ENCODE measurements at regions of chr5 and their contacts with region 1.

Region 1: GRCh38 chr5:175729829-175730277 is 72.0 kb downstream of the HRH2 start:
- DNase-seq: peak; percentile 90 to 98 (median 95)
- H3K4me3 ChIP-seq: peak overlapping the region in 40 of 59 donors; percentile 0 to 53 (median 31)
- H3K27ac ChIP-seq: no peak overlapping the region
- H3K27me3 ChIP-seq: peaks cover 0 to 18% (median 5%) of the 10 kb centered on the region in 45 donors
- CTCF ChIP-seq: peak; percentile 84 to 100 (median 98)

Region 2: GRCh38 chr5:175363300-175363699 is 366.6 kb before region 1 on chr5:
- intact Hi-C with region 1: no loop called
- DNase-seq: no peak
- H3K4me3 ChIP-seq: no peak overlapping the region
- H3K27ac ChIP-seq: no peak overlapping the region
- H3K27me3 ChIP-seq: no peaks in the 10 kb centered on the region
- CTCF ChIP-seq: no peak

Region 3: DNA sequence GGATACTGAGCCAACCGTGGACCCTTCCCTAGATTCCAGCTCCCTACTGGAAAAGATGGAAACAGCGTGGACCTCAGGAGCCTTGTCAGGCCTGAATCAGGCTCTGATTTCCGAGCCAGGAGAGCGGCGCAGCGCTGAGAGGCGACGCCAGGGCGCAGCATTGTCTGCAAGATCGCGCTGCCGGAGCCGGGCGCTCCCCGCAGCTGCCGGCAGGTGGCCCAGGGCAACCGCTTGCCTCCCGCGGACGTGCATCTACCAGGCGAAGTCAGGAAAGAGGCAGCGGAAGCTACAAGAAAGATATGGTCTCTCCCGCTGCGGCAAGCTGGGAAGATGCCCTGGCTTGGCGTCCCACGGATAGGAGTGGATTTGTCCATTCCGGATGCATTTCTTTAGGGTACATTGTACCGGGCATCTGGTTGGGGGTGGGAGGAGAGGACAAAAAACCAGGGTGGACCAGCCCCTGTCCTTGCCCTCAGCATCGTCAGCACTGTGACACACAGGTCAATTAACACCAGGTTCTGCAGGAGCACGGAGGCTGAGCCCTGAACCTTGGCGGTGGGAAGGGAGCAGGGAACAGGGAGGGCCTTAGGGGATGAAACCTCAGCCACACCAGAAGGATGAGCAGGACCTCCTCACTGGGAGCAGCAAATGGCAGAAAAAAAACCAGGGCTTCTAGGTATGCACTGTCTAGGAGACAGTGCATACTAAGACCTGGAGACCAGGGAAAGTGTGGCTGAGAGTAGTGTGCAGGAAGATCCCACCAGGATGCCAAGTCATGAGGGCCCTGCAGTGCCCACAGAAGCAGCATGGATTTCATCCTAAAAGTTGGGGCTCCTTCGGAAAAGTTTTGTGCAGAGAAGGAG is 195.6 kb before region 1 on chr5:
- intact Hi-C with region 1: loop called in 1 of 2 experiments (anchors 5 kb)
- DNase-seq: peak; percentile 68 to 88 (median 85)
- H3K4me3 ChIP-seq: peak overlapping the region in 39 of 59 donors; percentile 10 to 52 (median 37)
- H3K27ac ChIP-seq: peak overlapping the region in 17 of 59 donors; percentile 8 to 81 (median 36)
- H3K27me3 ChIP-seq: peaks cover 0 to 3% (median 0%) of the 10 kb centered on the region in 45 donors
- CTCF ChIP-seq: peak; percentile 85 to 100 (median 98)

Region 4: GRCh38 chr5:175873088-175873454 is 143.2 kb after region 1 on chr5:
- intact Hi-C with region 1: loop called in 1 of 2 experiments (anchors 5 kb)
- DNase-seq: peak; percentile 47 to 87 (median 70)
- H3K4me3 ChIP-seq: peak overlapping the region in 54 of 59 donors; percentile 1 to 72 (median 56)
- H3K27ac ChIP-seq: peak overlapping the region in 21 of 59 donors; percentile 2 to 88 (median 39)
- H3K27me3 ChIP-seq: peaks cover 0 to 49% (median 19%) of the 10 kb centered on the region in 45 donors
- CTCF ChIP-seq: peak in 31 of 56 donors; percentile 10 to 49 (median 27)

Region 5: GRCh38 chr5:175902026-175902425 is 172.2 kb after region 1 on chr5:
- intact Hi-C with region 1: no loop called
- DNase-seq: peak in 1 of 10 donors; percentile 65
- H3K4me3 ChIP-seq: no peak overlapping the region
- H3K27ac ChIP-seq: no peak overlapping the region
- H3K27me3 ChIP-seq: no peaks in the 10 kb centered on the region
- CTCF ChIP-seq: no peak